CD4-positive, alpha-beta memory T cell (primary cell): ENCODE measurements at regions of chr9 and their contacts with region 1.

Region 1: DNA sequence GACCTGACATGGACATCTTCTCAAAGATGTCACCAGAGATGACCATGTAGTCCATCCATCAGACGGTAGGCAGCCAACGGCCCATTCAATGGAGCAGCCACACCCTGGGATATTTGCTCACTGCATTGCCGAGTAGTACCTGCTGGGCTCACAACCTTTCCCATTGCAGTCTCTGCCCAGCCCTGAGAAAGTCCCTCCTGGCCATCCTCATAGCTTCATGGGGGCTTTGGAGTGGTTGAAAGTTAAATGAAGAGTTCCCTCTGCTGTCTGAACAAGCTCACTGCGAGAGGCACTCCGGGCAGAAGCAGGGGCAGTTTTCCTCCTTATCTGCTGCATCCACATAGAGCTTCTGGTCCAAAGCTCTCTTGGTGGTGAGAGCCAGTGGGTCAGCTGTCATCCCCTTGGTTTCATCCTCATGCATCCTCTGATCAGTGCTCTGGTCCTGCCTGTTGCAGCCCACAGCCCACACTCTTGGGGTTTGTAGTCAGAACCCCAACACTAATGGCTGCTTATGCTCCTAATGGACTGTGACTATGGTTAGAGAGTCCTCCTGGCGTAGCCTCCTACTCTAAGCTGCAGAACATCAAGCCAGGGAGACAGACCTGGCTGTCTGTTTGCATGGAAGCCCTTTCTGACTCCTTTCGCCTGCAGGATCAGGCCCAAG is 23.4 kb downstream of the TNFSF8 start:
- DNase-seq: no peak
- H3K4me3 ChIP-seq: no peak overlapping the region
- H3K4me3 Mint-ChIP-seq: peak overlapping the region in 7 of 8 donors; percentile 26 to 85 (median 75)
- H3K27ac ChIP-seq: peak overlapping the region; percentile 44
- H3K27ac Mint-ChIP-seq: peak overlapping the region in 6 of 7 donors; percentile 88 to 96 (median 90)
- H3K4me1 ChIP-seq: peaks cover 100% of the 10 kb centered on the region
- H3K4me1 Mint-ChIP-seq: peaks cover 59 to 83% (median 69%) of the 10 kb centered on the region in 4 donors
- H3K27me3 ChIP-seq: no peaks in the 10 kb centered on the region
- H3K27me3 Mint-ChIP-seq: no peaks in the 10 kb centered on the region

Region 2: GRCh38 chr9:114691046-114691955 is 215.7 kb before region 1 on chr9:
- CTCF ChIA-PET with region 1: interaction called, 49 read pairs
- POLR2A ChIA-PET with region 1: interaction called, 5 read pairs
- intact Hi-C with region 1: no loop called
- DNase-seq: peak; percentile 64 to 86 (median 75)
- H3K4me3 ChIP-seq: peak overlapping the region; percentile 4 to 46
- H3K4me3 Mint-ChIP-seq: peak overlapping the region; percentile 40 to 77 (median 72)
- H3K27ac ChIP-seq: peak overlapping the region; percentile 54
- H3K27ac Mint-ChIP-seq: peak overlapping the region; percentile 65 to 96 (median 93)
- H3K4me1 ChIP-seq: peaks cover 41% of the 10 kb centered on the region
- H3K4me1 Mint-ChIP-seq: peaks cover 28 to 45% (median 31%) of the 10 kb centered on the region in 4 donors
- H3K27me3 ChIP-seq: no peaks in the 10 kb centered on the region
- H3K27me3 Mint-ChIP-seq: no peaks in the 10 kb centered on the region

Region 3: GRCh38 chr9:114754581-114754980 is 152.5 kb before region 1 on chr9:
- CTCF ChIA-PET with region 1: interaction called, 10 read pairs
- POLR2A ChIA-PET with region 1: no interaction called
- intact Hi-C with region 1: no loop called
- DNase-seq: no peak
- H3K4me3 ChIP-seq: no peak overlapping the region
- H3K4me3 Mint-ChIP-seq: no peak overlapping the region
- H3K27ac ChIP-seq: no peak overlapping the region
- H3K27ac Mint-ChIP-seq: peak overlapping the region in 4 of 7 donors; percentile 4 to 61 (median 26)
- H3K4me1 ChIP-seq: peaks cover 7% of the 10 kb centered on the region
- H3K4me1 Mint-ChIP-seq: peaks cover 6 to 15% (median 12%) of the 10 kb centered on the region in 4 donors
- H3K27me3 ChIP-seq: no peaks in the 10 kb centered on the region
- H3K27me3 Mint-ChIP-seq: no peaks in the 10 kb centered on the region

Region 4: GRCh38 chr9:114919611-114920010 is 12.6 kb after region 1 on chr9:
- CTCF ChIA-PET with region 1: interaction called, 66 read pairs
- POLR2A ChIA-PET with region 1: interaction called, 43 read pairs
- intact Hi-C with region 1: no loop called
- DNase-seq: no peak
- H3K4me3 ChIP-seq: no peak overlapping the region
- H3K4me3 Mint-ChIP-seq: peak overlapping the region in 7 of 8 donors; percentile 57 to 68 (median 67)
- H3K27ac ChIP-seq: no peak overlapping the region
- H3K27ac Mint-ChIP-seq: peak overlapping the region; percentile 72 to 89 (median 88)
- H3K4me1 ChIP-seq: peaks cover 86% of the 10 kb centered on the region
- H3K4me1 Mint-ChIP-seq: peaks cover 73 to 99% (median 87%) of the 10 kb centered on the region in 4 donors
- H3K27me3 ChIP-seq: no peaks in the 10 kb centered on the region
- H3K27me3 Mint-ChIP-seq: no peaks in the 10 kb centered on the region

Region 5: DNA sequence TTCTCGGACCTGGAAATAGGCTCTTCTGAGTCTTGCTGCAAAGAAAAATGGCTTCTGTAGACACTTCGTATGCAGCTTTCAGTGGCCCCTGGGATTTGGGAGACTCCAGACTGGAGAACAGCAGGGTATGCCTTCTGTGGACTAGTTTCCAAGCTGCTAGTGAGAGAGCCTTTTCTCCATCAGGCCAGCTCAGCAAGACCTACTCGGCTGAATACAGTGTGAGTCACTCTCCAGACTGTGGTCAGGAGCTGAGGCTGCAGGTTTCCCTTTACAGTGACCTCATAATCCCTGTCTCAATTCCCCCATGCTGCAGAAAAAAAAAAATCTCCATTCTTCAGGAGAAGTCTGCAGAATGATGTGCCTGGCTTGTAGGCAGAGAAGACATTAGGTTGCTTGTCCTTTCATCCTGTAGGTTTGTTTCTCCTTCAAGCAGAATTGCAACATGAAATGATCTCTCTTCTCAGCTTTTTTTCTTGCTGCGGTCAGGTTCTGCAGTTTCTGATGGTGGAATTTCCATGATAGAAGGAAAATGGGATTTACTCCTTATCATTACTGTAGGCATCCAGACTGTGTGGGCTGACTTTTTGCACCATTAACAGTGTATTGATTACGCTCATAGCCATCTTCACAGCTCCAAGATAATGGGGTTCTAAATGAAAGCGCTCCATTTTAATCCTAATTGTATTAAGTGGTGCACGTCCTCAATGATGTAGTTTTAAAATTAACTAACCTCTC is 101.7 kb after region 1 on chr9:
- CTCF ChIA-PET with region 1: interaction called, 69 read pairs
- POLR2A ChIA-PET with region 1: interaction called, 5 read pairs
- intact Hi-C with region 1: no loop called
- DNase-seq: no peak
- H3K4me3 ChIP-seq: no peak overlapping the region
- H3K4me3 Mint-ChIP-seq: no peak overlapping the region
- H3K27ac ChIP-seq: no peak overlapping the region
- H3K27ac Mint-ChIP-seq: no peak overlapping the region
- H3K4me1 ChIP-seq: peaks cover 31% of the 10 kb centered on the region
- H3K4me1 Mint-ChIP-seq: peaks cover 22 to 41% (median 26%) of the 10 kb centered on the region in 4 donors
- H3K27me3 ChIP-seq: no peaks in the 10 kb centered on the region
- H3K27me3 Mint-ChIP-seq: peaks cover 0 to 3% of the 10 kb centered on the region in 2 donors